Transverse colon (tissue), 4 donors: ENCODE measurements at regions of chr11 and their contacts with region 1.

Region 1: DNA sequence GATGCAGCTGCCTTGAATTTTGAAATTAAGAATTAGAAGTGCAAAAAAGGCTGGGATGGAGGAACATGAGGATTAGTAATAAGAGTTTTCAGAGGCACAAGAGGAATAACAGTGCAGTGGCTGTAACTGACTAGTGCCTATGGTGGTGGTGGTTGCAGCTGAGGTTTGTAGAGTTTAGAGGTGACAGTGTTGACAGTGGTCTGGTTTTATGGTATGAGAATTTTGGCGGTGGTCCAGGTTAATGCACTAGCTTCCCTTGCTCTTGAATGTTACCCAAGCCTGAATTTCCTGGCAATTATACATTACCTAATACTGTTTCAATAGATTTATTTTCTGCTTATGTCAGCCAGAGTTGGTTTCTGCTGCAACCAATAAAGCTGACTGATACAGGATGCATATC is 112.8 kb upstream of the C11orf87 start:
- DNase-seq: no peak
- H3K4me3 ChIP-seq: no peak overlapping the region
- H3K27ac ChIP-seq: no peak overlapping the region
- H3K4me1 ChIP-seq: no peaks in the 10 kb centered on the region
- H3K27me3 ChIP-seq: no peaks in the 10 kb centered on the region
- CTCF ChIP-seq: no peak
- EP300 ChIP-seq: no peak
- POLR2A ChIP-seq: no peak

Region 2: GRCh38 chr11:109247071-109247470 is 62.1 kb before region 1 on chr11:
- in situ Hi-C with region 1: loop called in 1 of 4 experiments (anchors 10 kb)
- intact Hi-C with region 1: no loop called
- DNase-seq: no peak
- H3K4me3 ChIP-seq: no peak overlapping the region
- H3K27ac ChIP-seq: no peak overlapping the region
- H3K4me1 ChIP-seq: no peaks in the 10 kb centered on the region
- H3K27me3 ChIP-seq: no peaks in the 10 kb centered on the region
- CTCF ChIP-seq: no peak
- EP300 ChIP-seq: no peak
- POLR2A ChIP-seq: no peak